Thyroid gland (tissue), 4 donors: ENCODE measurements at regions of chr11 and their contacts with region 1.

Region 1: GRCh38 chr11:78659326-78660270 is 84.9 kb upstream of the NARS2 start:
- DNase-seq: no peak
- H3K4me3 ChIP-seq: no peak overlapping the region
- H3K27ac ChIP-seq: no peak overlapping the region
- H3K4me1 ChIP-seq: peaks cover 4% of the 10 kb centered on the region in 2 donors
- H3K27me3 ChIP-seq: no peaks in the 10 kb centered on the region
- CTCF ChIP-seq: no peak
- POLR2A ChIP-seq: no peak

Region 2: GRCh38 chr11:78715639-78716311 is 56.2 kb after region 1 on chr11:
- intact Hi-C with region 1: loop called (anchors 10 kb)
- DNase-seq: peak; percentile 60 to 66
- H3K4me3 ChIP-seq: no peak overlapping the region
- H3K27ac ChIP-seq: no peak overlapping the region
- H3K4me1 ChIP-seq: peaks cover 9 to 14% of the 10 kb centered on the region in 2 donors
- H3K27me3 ChIP-seq: no peaks in the 10 kb centered on the region
- CTCF ChIP-seq: peak in 5 of 6 experiments; percentile 42 to 68 (median 58)
- POLR2A ChIP-seq: no peak

Region 3: GRCh38 chr11:78825591-78826020 is 166.0 kb after region 1 on chr11:
- intact Hi-C with region 1: loop called (anchors 10 kb)
- DNase-seq: peak in 1 of 2 donors; percentile 41
- H3K4me3 ChIP-seq: no peak overlapping the region
- H3K27ac ChIP-seq: peak overlapping the region in 1 of 3 donors; percentile 17
- H3K4me1 ChIP-seq: peaks cover 26 to 37% of the 10 kb centered on the region in 2 donors
- H3K27me3 ChIP-seq: no peaks in the 10 kb centered on the region
- CTCF ChIP-seq: no peak
- POLR2A ChIP-seq: no peak

Region 4: DNA sequence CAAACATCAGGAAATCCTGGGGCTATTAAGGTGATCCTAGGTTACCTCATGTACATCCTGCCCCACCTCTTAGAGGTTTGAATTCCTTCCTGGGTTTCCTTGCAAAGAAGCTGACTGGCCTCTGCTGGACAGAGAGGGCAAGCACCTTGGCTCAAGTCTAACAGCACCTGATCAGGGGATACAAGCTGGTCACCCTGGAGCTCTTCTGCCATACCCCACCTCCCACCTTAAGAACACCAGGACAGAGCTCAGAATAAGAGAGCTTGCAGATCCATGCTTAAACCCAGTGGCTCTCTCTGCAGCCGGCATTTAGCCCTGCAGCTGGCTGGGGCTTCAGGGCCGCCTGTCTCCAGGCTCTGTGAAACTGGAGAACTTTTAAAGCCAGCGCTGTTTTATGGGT is 301.6 kb after region 1 on chr11:
- intact Hi-C with region 1: loop called (anchors 10 kb)
- DNase-seq: peak; percentile 28 to 29
- H3K4me3 ChIP-seq: no peak overlapping the region
- H3K27ac ChIP-seq: no peak overlapping the region
- H3K4me1 ChIP-seq: peaks cover 10% of the 10 kb centered on the region in 2 donors
- H3K27me3 ChIP-seq: no peaks in the 10 kb centered on the region
- CTCF ChIP-seq: peak in 4 of 6 experiments; percentile 42 to 52 (median 47)
- POLR2A ChIP-seq: no peak